ENCODE measurements at regions of chr7 and their contacts with region 1.

Region 1: GRCh38 chr7:12322284-12322902 is 81.3 kb downstream of the VWDE start:
- DNase-seq: peak; percentile 26
- ATAC-seq: no peak
- H3K4me3 ChIP-seq: no peak overlapping the region
- H3K27ac ChIP-seq: no peak overlapping the region
- H3K4me1 ChIP-seq: no peaks in the 10 kb centered on the region
- H3K27me3 ChIP-seq: no peaks in the 10 kb centered on the region
- CTCF ChIP-seq: peak; percentile 56 to 71 (median 62); a peak in 5 of 6 replicates
- POLR2A ChIP-seq: no peak
- RAD21 ChIP-seq: peak; percentile 79

Region 2: GRCh38 chr7:11373546-11374142 is 948.7 kb before region 1 on chr7:
- CTCF ChIA-PET with region 1: no interaction called
- POLR2A ChIA-PET with region 1: no interaction called
- RAD21 ChIA-PET with region 1: no interaction called
- intact Hi-C with region 1: loop called (anchors 5 kb)
- DNase-seq: peak; percentile 23
- ATAC-seq: peak; percentile 68
- H3K4me3 ChIP-seq: no peak overlapping the region
- H3K27ac ChIP-seq: no peak overlapping the region
- H3K4me1 ChIP-seq: no peaks in the 10 kb centered on the region
- H3K27me3 ChIP-seq: no peaks in the 10 kb centered on the region
- CTCF ChIP-seq: peak; percentile 37 to 65 (median 60); a peak in 5 of 6 replicates
- POLR2A ChIP-seq: no peak
- RAD21 ChIP-seq: peak; percentile 63

Region 3: GRCh38 chr7:11427686-11428273 is 894.6 kb before region 1 on chr7:
- CTCF ChIA-PET with region 1: interaction called, 3 read pairs
- POLR2A ChIA-PET with region 1: no interaction called
- RAD21 ChIA-PET with region 1: no interaction called
- intact Hi-C with region 1: loop called (anchors 1 kb)
- DNase-seq: peak; percentile 53
- ATAC-seq: peak; percentile 73
- H3K4me3 ChIP-seq: no peak overlapping the region
- H3K27ac ChIP-seq: no peak overlapping the region
- H3K4me1 ChIP-seq: no peaks in the 10 kb centered on the region
- H3K27me3 ChIP-seq: no peaks in the 10 kb centered on the region
- CTCF ChIP-seq: peak; percentile 57 to 78 (median 71)
- POLR2A ChIP-seq: no peak
- RAD21 ChIP-seq: peak; percentile 82

Region 4: GRCh38 chr7:11831736-11832495 is 490.5 kb before region 1 on chr7 and contains the start of gene THSD7A:
- CTCF ChIA-PET with region 1: interaction called, 5 read pairs
- POLR2A ChIA-PET with region 1: no interaction called
- RAD21 ChIA-PET with region 1: interaction called in 1 of 2 experiments, 3 read pairs
- intact Hi-C with region 1: loop called (anchors 1 kb)
- DNase-seq: no peak
- ATAC-seq: peak; percentile 90
- H3K4me3 ChIP-seq: peak within 1 kb of the TSS; percentile 50 to 71
- H3K27ac ChIP-seq: no peak within 1 kb of the TSS
- H3K4me1 ChIP-seq: peaks cover 0 to 15% of the 10 kb centered on the region in 2 experiments; a peak in 1 of 4 replicates
- H3K27me3 ChIP-seq: no peaks in the 10 kb centered on the region
- CTCF ChIP-seq: peak in 1 of 3 experiments; percentile 13; a peak in 1 of 6 replicates
- POLR2A ChIP-seq: no peak
- RAD21 ChIP-seq: peak; percentile 19
- total RNA-seq, gene THSD7A: 0.05 TPM

Region 5: DNA sequence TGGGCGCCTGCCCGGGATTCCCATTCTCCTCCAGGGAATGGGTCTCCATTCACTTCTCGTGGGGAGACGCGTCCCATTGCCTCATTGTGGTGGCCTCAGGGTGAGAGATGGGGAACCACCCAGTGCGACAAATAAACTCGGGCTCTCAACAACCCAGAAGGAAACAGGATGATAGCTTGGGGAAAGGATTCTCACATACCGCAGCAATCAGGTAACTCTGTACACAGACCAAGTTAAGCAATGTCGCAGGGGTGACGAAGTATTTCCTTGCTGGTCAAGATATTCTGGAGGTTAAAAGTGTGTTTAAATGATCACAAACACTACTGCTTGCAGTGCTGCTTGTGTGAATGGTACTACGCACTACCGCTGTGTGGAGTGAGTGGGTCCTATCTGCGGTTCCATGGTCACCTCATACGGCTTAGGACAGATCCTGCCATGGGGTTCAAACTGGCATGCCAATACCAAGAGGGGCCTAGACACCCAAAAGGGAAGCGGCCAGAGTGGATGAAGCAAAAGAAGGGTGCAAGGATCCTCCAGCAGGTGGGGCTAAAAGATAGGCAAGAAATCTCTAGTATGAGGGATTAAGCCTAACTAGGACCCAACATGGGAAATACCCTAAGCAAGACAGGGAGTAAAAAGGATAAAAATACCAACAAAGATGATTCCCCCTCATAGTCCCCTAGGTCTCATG is 255.1 kb before region 1 on chr7:
- CTCF ChIA-PET with region 1: interaction called, 5 read pairs
- POLR2A ChIA-PET with region 1: no interaction called
- RAD21 ChIA-PET with region 1: no interaction called
- intact Hi-C with region 1: loop called (anchors 1 kb)
- DNase-seq: peak; percentile 58
- ATAC-seq: peak; percentile 71
- H3K4me3 ChIP-seq: peak overlapping the region in 1 of 2 experiments; percentile 20; a peak in 1 of 4 replicates
- H3K27ac ChIP-seq: no peak overlapping the region
- H3K4me1 ChIP-seq: peaks cover 0 to 31% of the 10 kb centered on the region in 2 experiments; a peak in 2 of 4 replicates
- H3K27me3 ChIP-seq: no peaks in the 10 kb centered on the region
- CTCF ChIP-seq: peak; percentile 65 to 74 (median 68)
- POLR2A ChIP-seq: no peak
- RAD21 ChIP-seq: peak; percentile 89

Region 6: GRCh38 chr7:12481722-12482121 is 159.3 kb after region 1 on chr7:
- CTCF ChIA-PET with region 1: no interaction called
- POLR2A ChIA-PET with region 1: no interaction called
- RAD21 ChIA-PET with region 1: no interaction called
- intact Hi-C with region 1: loop called (anchors 10 kb)
- DNase-seq: no peak
- ATAC-seq: no peak
- H3K4me3 ChIP-seq: no peak overlapping the region
- H3K27ac ChIP-seq: no peak overlapping the region
- H3K4me1 ChIP-seq: no peaks in the 10 kb centered on the region
- H3K27me3 ChIP-seq: no peaks in the 10 kb centered on the region
- CTCF ChIP-seq: no peak
- POLR2A ChIP-seq: no peak
- RAD21 ChIP-seq: no peak

Region 7: DNA sequence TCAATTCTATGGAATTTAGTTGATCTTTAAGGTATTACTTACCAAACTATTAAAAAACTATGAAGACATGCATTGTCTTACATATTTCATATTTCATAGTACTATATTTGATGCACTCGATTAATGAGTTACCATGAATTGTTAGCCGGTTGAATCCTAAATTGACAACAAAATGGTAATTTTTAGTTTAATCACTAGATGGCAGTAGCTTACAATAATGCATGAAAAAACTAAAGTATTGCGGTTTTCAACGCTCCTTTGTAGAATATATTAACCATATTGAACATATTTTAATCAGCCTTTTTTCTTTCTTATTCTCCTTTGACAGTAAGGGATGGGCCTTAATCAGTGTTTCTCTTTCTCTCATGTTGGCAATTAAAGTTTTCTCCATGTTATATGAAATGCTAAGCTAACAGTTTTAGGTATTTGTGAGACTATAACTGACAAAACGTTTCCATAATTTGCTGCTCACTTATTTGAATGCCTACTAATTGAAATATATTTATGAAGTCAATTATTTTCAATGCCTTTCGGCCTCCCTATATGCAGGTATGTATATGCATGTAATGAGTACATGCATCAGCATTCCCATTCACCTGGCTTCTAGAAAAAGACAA is 316.6 kb after region 1 on chr7:
- CTCF ChIA-PET with region 1: no interaction called
- POLR2A ChIA-PET with region 1: no interaction called
- RAD21 ChIA-PET with region 1: no interaction called
- intact Hi-C with region 1: no loop called
- DNase-seq: peak; percentile 36
- ATAC-seq: peak; percentile 70
- H3K4me3 ChIP-seq: no peak overlapping the region
- H3K27ac ChIP-seq: no peak overlapping the region
- H3K4me1 ChIP-seq: peaks cover 0 to 7% of the 10 kb centered on the region in 2 experiments; a peak in 2 of 4 replicates
- H3K27me3 ChIP-seq: no peaks in the 10 kb centered on the region
- CTCF ChIP-seq: peak; percentile 33 to 70 (median 66); a peak in 5 of 6 replicates
- POLR2A ChIP-seq: no peak
- RAD21 ChIP-seq: peak; percentile 81